ENCODE measurements at regions of chr12 and their contacts with region 1.

Region 1: GRCh38 chr12:94101738-94102660 is 46.4 kb upstream of the PLXNC1 start:
- DNase-seq: peak; percentile 82 to 86 (median 83)
- H3K4me3 ChIP-seq: peak overlapping the region; percentile 54 to 82
- H3K4me3 Mint-ChIP-seq: peak overlapping the region; percentile 85 to 91 (median 88)
- H3K27ac ChIP-seq: peak overlapping the region; percentile 20
- H3K27ac Mint-ChIP-seq: peak overlapping the region; percentile 65 to 91 (median 72)
- H3K4me1 ChIP-seq: peaks cover 10% of the 10 kb centered on the region
- H3K4me1 Mint-ChIP-seq: peaks cover 5 to 21% (median 7%) of the 10 kb centered on the region in 4 donors
- H3K27me3 ChIP-seq: peaks cover 2% of the 10 kb centered on the region
- H3K27me3 Mint-ChIP-seq: peaks cover 10 to 11% of the 10 kb centered on the region in 2 donors

Region 2: DNA sequence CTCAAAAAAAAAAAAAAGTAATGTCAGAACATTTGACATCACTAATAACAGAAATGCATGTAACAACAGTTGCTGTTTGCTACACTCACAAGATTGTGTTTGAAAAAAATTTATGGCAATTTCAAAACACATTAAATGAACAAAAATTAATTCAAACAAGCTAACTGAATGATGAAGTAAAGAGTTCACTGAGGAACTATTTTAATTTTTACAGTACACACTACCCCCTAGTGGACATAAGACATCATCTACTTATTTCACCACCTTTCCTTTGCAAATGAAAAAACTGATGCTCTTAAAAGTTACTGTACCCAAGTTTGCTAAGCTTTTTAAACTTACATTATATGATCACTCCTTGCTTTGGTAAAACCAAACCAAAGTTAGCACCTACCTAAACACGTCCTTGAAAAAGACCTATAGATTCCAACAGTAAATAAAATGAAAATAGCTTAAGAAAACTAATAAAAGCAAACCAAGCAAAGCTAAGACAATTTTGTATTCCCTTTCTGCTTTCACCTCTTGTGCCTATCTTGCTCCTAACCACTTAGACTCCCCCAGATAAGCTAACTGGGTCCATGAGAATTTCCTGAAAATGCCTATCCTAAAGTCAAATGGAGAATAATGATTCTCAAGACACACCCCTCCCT is 682.5 kb before region 1 on chr12:
- CTCF ChIA-PET with region 1: interaction called, 24 read pairs
- POLR2A ChIA-PET with region 1: no interaction called
- intact Hi-C with region 1: loop called (anchors 5 kb)
- DNase-seq: peak in 4 of 5 donors; percentile 41 to 55 (median 48)
- H3K4me3 ChIP-seq: no peak overlapping the region
- H3K4me3 Mint-ChIP-seq: peak overlapping the region in 3 of 8 donors; percentile 8 to 21 (median 19)
- H3K27ac ChIP-seq: no peak overlapping the region
- H3K27ac Mint-ChIP-seq: peak overlapping the region; percentile 39 to 89 (median 76)
- H3K4me1 ChIP-seq: peaks cover 80% of the 10 kb centered on the region
- H3K4me1 Mint-ChIP-seq: peaks cover 62 to 93% (median 80%) of the 10 kb centered on the region in 4 donors
- H3K27me3 ChIP-seq: no peaks in the 10 kb centered on the region
- H3K27me3 Mint-ChIP-seq: no peaks in the 10 kb centered on the region

Region 3: GRCh38 chr12:93514853-93515252 is 587.1 kb before region 1 on chr12:
- CTCF ChIA-PET with region 1: interaction called, 480 read pairs
- POLR2A ChIA-PET with region 1: no interaction called
- intact Hi-C with region 1: no loop called
- DNase-seq: no peak
- H3K4me3 ChIP-seq: no peak overlapping the region
- H3K4me3 Mint-ChIP-seq: no peak overlapping the region
- H3K27ac ChIP-seq: no peak overlapping the region
- H3K27ac Mint-ChIP-seq: peak overlapping the region in 2 of 7 donors; percentile 46 to 59
- H3K4me1 ChIP-seq: no peaks in the 10 kb centered on the region
- H3K4me1 Mint-ChIP-seq: peaks cover 0 to under 1% (median 0%) of the 10 kb centered on the region in 4 donors
- H3K27me3 ChIP-seq: no peaks in the 10 kb centered on the region
- H3K27me3 Mint-ChIP-seq: no peaks in the 10 kb centered on the region

Region 4: GRCh38 chr12:93563807-93564538 is 538.0 kb before region 1 on chr12:
- CTCF ChIA-PET with region 1: interaction called, 217 read pairs
- POLR2A ChIA-PET with region 1: interaction called, 37 read pairs
- intact Hi-C with region 1: loop called (anchors 1 kb)
- DNase-seq: no peak
- H3K4me3 ChIP-seq: no peak overlapping the region
- H3K4me3 Mint-ChIP-seq: no peak overlapping the region
- H3K27ac ChIP-seq: no peak overlapping the region
- H3K27ac Mint-ChIP-seq: no peak overlapping the region
- H3K4me1 ChIP-seq: peaks cover 5% of the 10 kb centered on the region
- H3K4me1 Mint-ChIP-seq: peaks cover 4 to 8% (median 6%) of the 10 kb centered on the region in 4 donors
- H3K27me3 ChIP-seq: no peaks in the 10 kb centered on the region
- H3K27me3 Mint-ChIP-seq: no peaks in the 10 kb centered on the region

Region 5: GRCh38 chr12:93773122-93773871 is 328.7 kb before region 1 on chr12:
- CTCF ChIA-PET with region 1: interaction called, 158 read pairs
- POLR2A ChIA-PET with region 1: interaction called, 18 read pairs
- intact Hi-C with region 1: no loop called
- DNase-seq: peak in 4 of 5 donors; percentile 11 to 69 (median 36)
- H3K4me3 ChIP-seq: no peak overlapping the region
- H3K4me3 Mint-ChIP-seq: peak overlapping the region in 2 of 8 donors; percentile 40 to 48
- H3K27ac ChIP-seq: no peak overlapping the region
- H3K27ac Mint-ChIP-seq: peak overlapping the region in 6 of 7 donors; percentile 38 to 88 (median 64)
- H3K4me1 ChIP-seq: peaks cover 16% of the 10 kb centered on the region
- H3K4me1 Mint-ChIP-seq: peaks cover 15 to 30% (median 24%) of the 10 kb centered on the region in 4 donors
- H3K27me3 ChIP-seq: no peaks in the 10 kb centered on the region
- H3K27me3 Mint-ChIP-seq: no peaks in the 10 kb centered on the region

Region 6: DNA sequence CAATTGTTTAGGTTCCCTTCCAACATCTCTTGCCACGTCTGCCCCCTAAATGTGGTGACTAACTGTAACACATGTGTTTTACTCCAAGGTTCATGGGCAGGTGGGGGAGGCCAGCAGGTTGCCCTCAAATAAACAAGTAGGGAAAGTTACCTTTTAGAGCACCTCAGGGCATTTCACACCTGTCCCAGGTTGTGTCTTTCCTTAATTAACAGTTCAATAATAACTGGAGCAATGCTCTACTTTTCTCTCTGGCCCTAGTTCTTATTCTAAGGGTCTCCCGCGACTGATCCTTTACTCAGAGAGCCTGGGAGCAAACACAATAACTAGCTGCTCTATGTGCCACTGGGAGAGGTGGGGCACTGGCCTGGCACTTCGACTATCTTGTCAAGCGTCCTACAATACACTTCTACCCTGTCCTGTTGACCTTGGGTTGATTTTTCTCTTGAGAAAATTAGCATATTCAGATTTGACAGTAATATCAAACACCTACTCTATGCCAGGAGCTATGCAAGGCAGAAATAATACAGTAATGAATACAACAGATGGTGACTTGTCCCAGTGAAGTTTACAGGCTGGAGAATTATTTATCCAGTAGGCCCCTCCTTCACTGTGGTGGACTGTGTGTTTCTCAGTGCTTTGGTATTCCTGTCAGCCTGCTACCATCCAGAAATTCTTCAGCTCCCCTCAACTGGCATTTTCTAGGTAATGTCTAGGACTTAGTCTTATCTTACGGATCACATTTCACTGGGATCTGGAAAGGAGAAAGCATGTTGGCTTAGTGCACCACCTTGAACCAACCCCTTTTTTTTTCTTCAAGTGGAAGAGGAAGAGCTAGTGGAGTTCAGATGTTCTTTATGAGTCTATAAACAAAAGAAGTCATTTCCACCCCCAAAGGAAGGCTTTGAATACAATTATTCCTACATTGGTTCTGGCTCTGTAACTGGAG is 222.2 kb before region 1 on chr12:
- CTCF ChIA-PET with region 1: no interaction called
- POLR2A ChIA-PET with region 1: no interaction called
- intact Hi-C with region 1: no loop called
- DNase-seq: no peak
- H3K4me3 ChIP-seq: peak overlapping the region in 1 of 2 donors; percentile 1
- H3K4me3 Mint-ChIP-seq: no peak overlapping the region
- H3K27ac ChIP-seq: no peak overlapping the region
- H3K27ac Mint-ChIP-seq: peak overlapping the region in 6 of 7 donors; percentile 33 to 85 (median 62)
- H3K4me1 ChIP-seq: peaks cover 15% of the 10 kb centered on the region
- H3K4me1 Mint-ChIP-seq: peaks cover 7 to 19% (median 11%) of the 10 kb centered on the region in 4 donors
- H3K27me3 ChIP-seq: no peaks in the 10 kb centered on the region
- H3K27me3 Mint-ChIP-seq: no peaks in the 10 kb centered on the region

Region 7: DNA sequence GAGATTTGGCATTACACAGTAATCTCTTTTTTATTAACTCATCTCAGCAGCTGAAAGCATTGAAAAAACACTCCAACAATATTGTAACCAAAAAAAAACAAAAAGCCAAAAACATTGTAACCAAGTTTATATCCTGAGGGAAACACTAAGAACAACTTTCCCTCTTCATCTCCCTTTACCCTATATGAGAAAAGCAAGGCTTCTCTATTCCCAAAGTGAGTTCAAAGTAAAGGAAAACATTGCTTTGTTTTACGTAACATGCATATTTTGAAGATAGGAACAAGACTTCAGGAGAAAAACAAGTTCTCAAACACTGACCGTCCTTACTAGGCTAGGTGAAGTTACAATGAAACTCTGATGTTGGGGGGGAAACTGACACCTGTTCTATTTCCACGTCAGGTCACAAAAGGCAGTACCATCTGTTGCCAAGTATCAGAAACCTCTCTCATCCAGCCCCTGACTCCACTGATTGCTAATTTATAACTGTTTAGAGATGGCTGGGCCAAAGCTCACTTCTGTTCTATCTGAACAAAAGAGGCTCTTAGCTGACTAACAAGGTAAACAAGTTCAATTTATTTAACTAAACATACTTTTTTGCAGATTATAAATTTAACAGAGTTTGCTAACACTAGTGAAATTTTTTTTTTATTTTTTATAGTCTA is 21.5 kb before region 1 on chr12:
- CTCF ChIA-PET with region 1: interaction called, 68 read pairs
- POLR2A ChIA-PET with region 1: interaction called, 3 read pairs
- intact Hi-C with region 1: no loop called
- DNase-seq: no peak
- H3K4me3 ChIP-seq: no peak overlapping the region
- H3K4me3 Mint-ChIP-seq: no peak overlapping the region
- H3K27ac ChIP-seq: no peak overlapping the region
- H3K27ac Mint-ChIP-seq: no peak overlapping the region
- H3K4me1 ChIP-seq: no peaks in the 10 kb centered on the region
- H3K4me1 Mint-ChIP-seq: peaks cover 7 to 12% (median 10%) of the 10 kb centered on the region in 4 donors
- H3K27me3 ChIP-seq: no peaks in the 10 kb centered on the region
- H3K27me3 Mint-ChIP-seq: peaks cover 6 to 9% of the 10 kb centered on the region in 2 donors

Region 8: DNA sequence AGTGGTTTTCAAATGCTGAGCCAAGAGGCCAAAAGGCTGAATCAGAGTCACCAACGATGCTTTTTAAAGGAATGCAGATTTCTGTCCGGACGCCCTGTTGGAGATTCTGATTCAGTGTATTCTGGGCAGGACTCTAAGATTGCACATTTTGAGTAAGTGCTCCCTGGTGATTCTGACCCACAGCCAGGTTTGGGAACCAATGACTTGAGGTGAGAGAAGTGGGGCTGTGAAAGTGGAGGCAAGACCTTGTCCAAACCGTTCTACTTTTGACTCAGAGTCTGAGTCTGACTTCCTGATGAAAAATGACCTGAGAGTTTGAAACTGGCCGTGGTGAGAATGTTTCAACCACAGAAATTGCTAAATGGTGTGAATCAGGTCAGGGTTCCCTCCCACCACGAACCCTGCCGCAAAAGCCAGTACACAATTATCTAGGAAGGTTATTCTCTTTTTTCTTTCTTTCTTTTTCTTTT is 1598.4 kb after region 1 on chr12:
- CTCF ChIA-PET with region 1: no interaction called
- POLR2A ChIA-PET with region 1: no interaction called
- intact Hi-C with region 1: no loop called
- DNase-seq: no peak
- H3K4me3 ChIP-seq: no peak overlapping the region
- H3K4me3 Mint-ChIP-seq: no peak overlapping the region
- H3K27ac ChIP-seq: no peak overlapping the region
- H3K27ac Mint-ChIP-seq: no peak overlapping the region
- H3K4me1 ChIP-seq: no peaks in the 10 kb centered on the region
- H3K4me1 Mint-ChIP-seq: no peaks in the 10 kb centered on the region
- H3K27me3 ChIP-seq: no peaks in the 10 kb centered on the region
- H3K27me3 Mint-ChIP-seq: peaks cover 0 to 9% of the 10 kb centered on the region in 2 donors

Measured in CD4-positive, alpha-beta memory T cell (primary cell).